Colonic mucosa (tissue), 4 donors: ENCODE measurements at regions of chr17 and their contacts with region 1.

Region 1: DNA sequence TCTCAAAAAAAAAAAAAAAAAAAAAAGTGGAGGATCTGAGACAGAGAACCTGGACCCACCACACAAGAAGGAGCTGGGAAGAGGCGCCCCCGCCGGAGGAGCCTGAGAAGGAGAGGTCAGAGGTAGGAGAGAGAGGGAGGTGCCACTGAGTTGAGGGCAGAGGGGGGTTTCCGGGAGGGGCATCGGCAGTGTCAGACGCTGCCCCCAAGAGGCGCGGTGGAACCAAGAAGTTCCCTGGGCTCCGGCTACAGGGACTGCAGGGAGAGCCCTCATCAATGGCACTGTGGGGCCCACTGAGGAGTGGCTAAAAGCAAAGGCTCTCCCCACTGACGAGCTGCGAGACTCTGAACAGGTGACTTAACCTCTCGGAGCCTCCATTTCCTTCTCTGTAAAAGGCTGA is 4.2 kb downstream of the CCDC42 start:
- DNase-seq: no peak
- H3K4me3 ChIP-seq: no peak overlapping the region
- H3K27ac ChIP-seq: no peak overlapping the region
- H3K4me1 ChIP-seq: no peaks in the 10 kb centered on the region
- H3K27me3 ChIP-seq: no peaks in the 10 kb centered on the region
- CTCF ChIP-seq: no peak

Region 2: DNA sequence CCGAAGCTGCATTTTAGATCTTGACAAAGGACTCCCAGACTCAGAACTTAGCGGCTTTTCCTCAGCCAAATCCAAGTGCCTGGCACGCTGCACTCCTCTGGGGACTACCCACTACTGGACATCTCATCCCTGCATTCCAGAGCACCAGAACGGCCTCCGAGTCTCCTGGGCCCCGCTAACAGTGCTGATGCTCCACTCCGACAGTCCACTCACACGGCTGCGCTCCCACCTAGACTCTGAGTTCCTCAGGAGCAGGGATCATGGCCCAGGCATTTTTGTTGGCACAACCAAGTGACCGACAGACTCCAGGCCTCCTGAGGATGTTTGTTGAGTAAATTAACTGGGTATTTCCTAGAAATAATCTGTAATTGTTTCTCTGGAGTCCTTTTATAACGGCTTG is 225.7 kb before region 1 on chr17:
- intact Hi-C with region 1: no loop called
- DNase-seq: no peak
- H3K4me3 ChIP-seq: no peak overlapping the region
- H3K27ac ChIP-seq: no peak overlapping the region
- H3K4me1 ChIP-seq: no peaks in the 10 kb centered on the region
- H3K27me3 ChIP-seq: no peaks in the 10 kb centered on the region
- CTCF ChIP-seq: no peak

Region 3: DNA sequence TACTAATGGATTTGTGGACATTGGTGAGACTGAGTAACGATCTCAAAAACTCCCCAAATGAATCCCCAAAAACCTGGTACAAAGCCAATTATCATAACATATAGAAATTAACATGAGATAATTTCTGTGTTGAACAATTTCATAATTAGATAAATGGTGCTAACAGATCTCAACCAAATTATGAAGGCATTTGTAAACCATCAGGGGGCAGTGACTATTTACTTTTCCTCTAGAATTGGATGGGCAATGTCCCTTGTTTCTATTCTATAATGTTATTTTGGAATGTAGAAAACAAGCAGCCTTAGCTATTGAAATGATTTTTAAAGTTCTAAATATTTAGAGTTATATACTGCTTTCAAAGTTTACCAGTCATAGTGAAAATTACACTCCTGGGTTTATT is 167.7 kb before region 1 on chr17:
- intact Hi-C with region 1: loop called (anchors 5 kb)
- DNase-seq: no peak
- H3K4me3 ChIP-seq: no peak overlapping the region
- H3K27ac ChIP-seq: no peak overlapping the region
- H3K4me1 ChIP-seq: no peaks in the 10 kb centered on the region
- H3K27me3 ChIP-seq: no peaks in the 10 kb centered on the region
- CTCF ChIP-seq: no peak

Region 4: GRCh38 chr17:8776881-8777280 is 36.4 kb after region 1 on chr17:
- intact Hi-C with region 1: no loop called
- DNase-seq: no peak
- H3K4me3 ChIP-seq: no peak overlapping the region
- H3K27ac ChIP-seq: no peak overlapping the region
- H3K4me1 ChIP-seq: no peaks in the 10 kb centered on the region
- H3K27me3 ChIP-seq: no peaks in the 10 kb centered on the region
- CTCF ChIP-seq: no peak